HepG2 (cell line): ENCODE measurements at regions of chr11 and their contacts with region 1.

Region 1: DNA sequence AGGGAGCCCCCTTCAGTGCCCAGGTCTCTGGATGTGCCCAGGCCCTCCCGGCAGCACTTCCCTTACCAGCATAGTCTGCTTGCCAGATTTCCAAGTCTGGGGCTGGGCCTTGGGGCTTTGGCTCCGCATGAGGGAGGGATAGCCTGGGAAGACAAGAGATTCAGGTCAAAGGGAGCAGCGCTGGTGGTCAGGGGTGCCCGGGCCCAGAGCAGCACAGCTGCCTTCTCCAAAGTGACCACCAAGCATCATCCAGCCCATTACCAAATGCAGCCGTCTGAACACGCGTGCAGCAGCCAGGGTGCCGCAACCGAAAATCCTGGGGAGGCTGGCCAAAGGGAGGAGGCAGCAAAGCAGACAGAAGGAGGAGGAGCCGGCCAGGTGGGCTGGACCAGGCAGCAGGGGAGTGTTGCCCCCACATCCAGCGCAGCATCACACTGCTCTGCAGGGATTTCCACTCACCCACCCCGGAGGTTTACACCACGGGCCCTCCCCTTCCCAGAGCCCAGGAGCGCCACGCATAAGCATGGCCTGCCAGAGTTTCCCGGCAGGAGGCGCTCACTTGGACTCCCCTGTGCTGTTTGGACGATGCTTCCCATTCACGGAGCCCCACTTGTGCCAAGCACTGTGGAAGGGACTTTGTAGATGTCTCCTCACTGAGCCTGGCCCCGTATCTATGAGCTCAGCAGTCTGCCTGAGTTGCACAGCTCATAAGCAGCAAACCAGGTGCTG is 22.5 kb downstream of the TRIM29 start:
- DNase-seq: no peak
- ATAC-seq: peak; percentile 67
- H3K4me3 ChIP-seq: no peak overlapping the region
- H3K27ac ChIP-seq: no peak overlapping the region
- H3K4me1 ChIP-seq: no peaks in the 10 kb centered on the region
- H3K27me3 ChIP-seq: peaks cover 13 to 52% of the 10 kb centered on the region in 2 experiments; a peak in 4 of 5 replicates
- CTCF ChIP-seq: peak; percentile 59
- EP300 ChIP-seq: no peak
- POLR2A ChIP-seq: no peak
- RAD21 ChIP-seq: no peak

Region 2: GRCh38 chr11:119952441-119952840 is 163.0 kb before region 1 on chr11:
- CTCF ChIA-PET with region 1: no interaction called
- POLR2A ChIA-PET with region 1: no interaction called
- in situ Hi-C with region 1: no loop called
- intact Hi-C with region 1: no loop called
- DNase-seq: no peak
- ATAC-seq: no peak
- H3K4me3 ChIP-seq: no peak overlapping the region
- H3K27ac ChIP-seq: no peak overlapping the region
- H3K4me1 ChIP-seq: no peaks in the 10 kb centered on the region
- H3K27me3 ChIP-seq: peaks cover 1 to 9% of the 10 kb centered on the region in 2 experiments; a peak in 3 of 5 replicates
- CTCF ChIP-seq: no peak
- EP300 ChIP-seq: no peak
- POLR2A ChIP-seq: no peak
- RAD21 ChIP-seq: no peak

Region 3: DNA sequence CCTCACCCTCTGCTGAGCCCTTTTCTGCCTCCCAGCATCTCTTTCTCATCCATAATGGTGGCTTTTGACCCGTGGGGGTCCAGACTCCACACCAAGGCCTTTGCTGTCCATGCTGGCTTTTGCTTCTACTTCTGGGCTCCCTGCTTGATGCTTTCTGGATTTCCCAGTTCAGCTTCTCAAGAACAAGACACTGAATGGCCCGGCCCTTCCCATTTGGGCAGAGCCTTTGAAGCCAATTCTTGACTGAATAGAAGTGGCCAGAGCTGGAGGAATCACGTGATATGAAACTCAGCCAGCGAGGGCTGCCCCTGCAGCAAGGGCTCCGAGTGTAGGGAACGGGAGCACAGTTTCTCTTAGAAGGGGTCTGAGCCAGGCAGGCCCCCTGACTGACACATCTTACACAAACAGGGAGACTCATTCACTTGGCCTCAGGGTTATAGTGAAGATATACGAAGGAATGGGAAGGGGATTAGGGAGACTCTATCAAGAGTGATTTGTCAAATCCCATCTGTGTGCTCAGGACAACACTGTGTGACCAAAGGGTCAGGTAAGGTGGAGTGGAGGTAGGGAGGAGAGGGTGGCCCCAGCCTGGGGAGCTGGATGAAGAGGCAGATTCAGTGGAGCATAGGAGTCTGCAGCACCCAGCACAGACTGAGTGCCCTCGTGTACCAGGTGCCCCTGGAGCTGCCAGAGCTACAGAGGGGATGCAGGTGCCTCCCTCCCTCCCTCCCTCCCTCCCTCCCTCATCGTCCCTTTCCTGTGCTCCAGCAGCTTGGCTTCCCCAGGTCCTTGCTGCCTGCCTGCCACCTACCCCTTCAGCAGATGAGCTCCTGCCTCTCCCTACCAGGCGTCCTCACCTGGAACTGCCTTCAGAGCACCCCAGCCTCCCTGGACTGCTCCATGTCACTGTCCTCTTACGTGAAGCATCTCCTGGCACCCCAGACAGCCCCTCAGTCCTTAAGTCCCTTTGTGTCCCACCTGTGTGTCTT is 83.5 kb before region 1 on chr11:
- CTCF ChIA-PET with region 1: no interaction called
- POLR2A ChIA-PET with region 1: no interaction called
- in situ Hi-C with region 1: no loop called
- intact Hi-C with region 1: no loop called
- DNase-seq: no peak
- ATAC-seq: no peak
- H3K4me3 ChIP-seq: no peak overlapping the region
- H3K27ac ChIP-seq: no peak overlapping the region
- H3K4me1 ChIP-seq: no peaks in the 10 kb centered on the region
- H3K27me3 ChIP-seq: peaks cover 4 to 55% of the 10 kb centered on the region in 2 experiments; a peak in 4 of 5 replicates
- CTCF ChIP-seq: no peak
- EP300 ChIP-seq: no peak
- POLR2A ChIP-seq: no peak
- RAD21 ChIP-seq: no peak

Region 4: DNA sequence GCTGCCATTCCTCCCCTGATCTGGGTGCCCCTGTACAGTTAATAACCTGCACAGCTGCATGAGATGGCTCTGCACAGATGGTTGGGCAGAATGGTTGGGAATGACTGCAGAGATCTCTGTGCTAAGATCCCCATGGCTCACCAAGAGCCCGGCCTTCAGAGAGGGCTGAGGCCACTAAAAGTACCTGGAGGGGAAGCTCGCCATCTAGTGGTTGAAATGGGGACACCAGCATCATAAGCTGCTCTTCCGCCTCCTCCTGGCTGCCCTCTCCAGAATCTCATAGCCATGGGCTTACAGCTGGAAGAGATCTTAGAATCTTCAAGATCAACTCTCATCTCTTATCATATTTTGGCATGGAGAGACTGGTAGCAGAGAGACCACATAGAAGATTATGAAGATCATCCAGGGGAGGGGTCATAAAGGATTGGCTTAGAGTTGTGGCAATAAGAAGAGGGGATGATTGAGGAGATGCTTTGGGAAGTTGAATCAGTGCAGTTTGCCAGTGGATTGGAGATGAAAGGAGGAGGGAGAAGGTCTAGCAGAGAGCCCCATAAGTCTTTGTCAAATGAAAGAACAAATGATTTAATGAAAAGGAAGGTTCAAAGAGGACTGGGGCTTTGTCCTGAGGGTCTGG is 187.7 kb after region 1 on chr11:
- CTCF ChIA-PET with region 1: interaction called, 3 read pairs
- POLR2A ChIA-PET with region 1: no interaction called
- in situ Hi-C with region 1: no loop called
- intact Hi-C with region 1: loop called (anchors 2 kb)
- DNase-seq: peak; percentile 69
- ATAC-seq: peak; percentile 88
- H3K4me3 ChIP-seq: no peak overlapping the region
- H3K27ac ChIP-seq: no peak overlapping the region
- H3K4me1 ChIP-seq: no peaks in the 10 kb centered on the region
- H3K27me3 ChIP-seq: peaks cover 0 to 62% of the 10 kb centered on the region in 2 experiments; a peak in 4 of 5 replicates
- CTCF ChIP-seq: peak; percentile 93
- EP300 ChIP-seq: no peak
- POLR2A ChIP-seq: no peak
- RAD21 ChIP-seq: peak; percentile 74